MCF 10A (cell line): ENCODE measurements at regions of chr9 and their contacts with region 1.

Region 1: GRCh38 chr9:106921341-106921899 is 58.5 kb downstream of the ZNF462 start:
- DNase-seq: peak; percentile 29
- H3K4me3 Mint-ChIP-seq: peak overlapping the region; percentile 38
- H3K27ac Mint-ChIP-seq: peak overlapping the region; percentile 82
- H3K4me1 Mint-ChIP-seq: peaks cover 36% of the 10 kb centered on the region
- H3K27me3 Mint-ChIP-seq: no peaks in the 10 kb centered on the region
- CTCF ChIP-seq: no peak

Region 2: DNA sequence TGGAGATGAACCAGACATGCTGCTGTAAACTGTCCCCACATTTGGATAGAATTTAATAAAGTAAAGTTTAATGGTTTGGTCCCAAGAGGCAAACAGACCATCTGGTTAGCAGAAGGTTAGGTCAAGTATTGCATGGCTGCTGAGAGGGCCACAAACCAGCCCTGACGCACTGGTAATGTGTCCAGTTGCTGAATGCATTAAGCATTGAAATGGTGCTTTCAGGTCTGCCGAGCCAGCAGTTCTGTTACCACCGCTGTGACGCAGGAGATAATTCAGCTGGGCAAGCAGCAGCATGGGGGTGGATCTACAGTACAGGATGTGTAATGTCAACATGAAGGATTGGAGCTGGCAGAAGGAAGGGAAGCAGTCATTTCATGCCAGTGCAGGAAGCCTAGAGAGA is 42.5 kb before region 1 on chr9:
- CTCF ChIA-PET with region 1: interaction called, 3 read pairs
- POLR2A ChIA-PET with region 1: interaction called, 172 read pairs
- intact Hi-C with region 1: no loop called
- DNase-seq: peak; percentile 92
- H3K4me3 Mint-ChIP-seq: no peak overlapping the region
- H3K27ac Mint-ChIP-seq: peak overlapping the region; percentile 76
- H3K4me1 Mint-ChIP-seq: peaks cover 57% of the 10 kb centered on the region
- H3K27me3 Mint-ChIP-seq: no peaks in the 10 kb centered on the region
- CTCF ChIP-seq: no peak

Region 3: GRCh38 chr9:106892632-106893031 is 28.8 kb before region 1 on chr9:
- CTCF ChIA-PET with region 1: interaction called, 5 read pairs
- POLR2A ChIA-PET with region 1: interaction called, 172 read pairs
- intact Hi-C with region 1: no loop called
- DNase-seq: peak; percentile 97
- H3K4me3 Mint-ChIP-seq: peak overlapping the region; percentile 53
- H3K27ac Mint-ChIP-seq: peak overlapping the region; percentile 77
- H3K4me1 Mint-ChIP-seq: peaks cover 60% of the 10 kb centered on the region
- H3K27me3 Mint-ChIP-seq: no peaks in the 10 kb centered on the region
- CTCF ChIP-seq: no peak

Region 4: GRCh38 chr9:106945727-106946660 is 24.6 kb after region 1 on chr9:
- CTCF ChIA-PET with region 1: no interaction called
- POLR2A ChIA-PET with region 1: interaction called, 4 read pairs
- intact Hi-C with region 1: loop called (anchors 2 kb)
- DNase-seq: peak; percentile 73
- H3K4me3 Mint-ChIP-seq: no peak overlapping the region
- H3K27ac Mint-ChIP-seq: peak overlapping the region; percentile 5
- H3K4me1 Mint-ChIP-seq: peaks cover 10% of the 10 kb centered on the region
- H3K27me3 Mint-ChIP-seq: no peaks in the 10 kb centered on the region
- CTCF ChIP-seq: no peak